GM12878 (cell line): ENCODE measurements at regions of chr2 and their contacts with region 1.

Region 1: GRCh38 chr2:25794544-25795276 is 83.6 kb downstream of the ASXL2 start:
- DNase-seq: peak; percentile 16
- ATAC-seq: peak; percentile 81
- H3K4me3 ChIP-seq: peak overlapping the region; percentile 25; the same call in 1 of the 2 replicates
- H3K27ac ChIP-seq: peak overlapping the region; percentile 13; the same call in 1 of the 2 replicates
- H3K4me1 ChIP-seq: peaks cover 5% of the 10 kb centered on the region; the same call in 1 of the 2 replicates
- H3K27me3 ChIP-seq: no peaks in the 10 kb centered on the region
- CTCF ChIP-seq: no peak
- EP300 ChIP-seq: no peak
- POLR2A ChIP-seq: no peak
- RAD21 ChIP-seq: no peak

Region 2: DNA sequence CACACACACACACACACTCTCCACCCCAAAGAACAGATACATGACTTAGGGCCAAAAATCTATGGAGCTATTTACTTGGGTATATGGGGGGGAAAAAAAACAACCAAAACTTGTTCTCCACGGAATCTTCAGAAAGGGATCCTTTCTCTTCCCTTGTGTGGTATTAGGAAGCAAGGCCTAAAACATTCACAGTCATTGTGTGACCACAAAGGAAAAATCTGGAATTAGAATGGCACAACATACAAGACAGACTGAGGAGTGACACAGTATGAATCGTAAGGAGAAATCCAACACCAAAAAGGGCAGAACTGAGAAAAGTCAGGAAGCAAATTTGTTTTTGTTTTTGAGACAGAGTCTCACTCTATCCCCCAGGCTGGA is 13.3 kb after region 1 on chr2:
- CTCF ChIA-PET with region 1: interaction called, 11 read pairs
- POLR2A ChIA-PET with region 1: interaction called, 4 read pairs
- RAD21 ChIA-PET with region 1: interaction called, 5 read pairs
- SMC1A ChIA-PET with region 1: interaction called, 26 read pairs
- in situ Hi-C with region 1: no loop called
- intact Hi-C with region 1: no loop called
- DNase-seq: no peak
- ATAC-seq: no peak
- H3K4me3 ChIP-seq: no peak overlapping the region
- H3K27ac ChIP-seq: no peak overlapping the region
- H3K4me1 ChIP-seq: no peaks in the 10 kb centered on the region
- H3K27me3 ChIP-seq: no peaks in the 10 kb centered on the region
- CTCF ChIP-seq: no peak
- EP300 ChIP-seq: no peak
- POLR2A ChIP-seq: no peak
- RAD21 ChIP-seq: no peak

Region 3: DNA sequence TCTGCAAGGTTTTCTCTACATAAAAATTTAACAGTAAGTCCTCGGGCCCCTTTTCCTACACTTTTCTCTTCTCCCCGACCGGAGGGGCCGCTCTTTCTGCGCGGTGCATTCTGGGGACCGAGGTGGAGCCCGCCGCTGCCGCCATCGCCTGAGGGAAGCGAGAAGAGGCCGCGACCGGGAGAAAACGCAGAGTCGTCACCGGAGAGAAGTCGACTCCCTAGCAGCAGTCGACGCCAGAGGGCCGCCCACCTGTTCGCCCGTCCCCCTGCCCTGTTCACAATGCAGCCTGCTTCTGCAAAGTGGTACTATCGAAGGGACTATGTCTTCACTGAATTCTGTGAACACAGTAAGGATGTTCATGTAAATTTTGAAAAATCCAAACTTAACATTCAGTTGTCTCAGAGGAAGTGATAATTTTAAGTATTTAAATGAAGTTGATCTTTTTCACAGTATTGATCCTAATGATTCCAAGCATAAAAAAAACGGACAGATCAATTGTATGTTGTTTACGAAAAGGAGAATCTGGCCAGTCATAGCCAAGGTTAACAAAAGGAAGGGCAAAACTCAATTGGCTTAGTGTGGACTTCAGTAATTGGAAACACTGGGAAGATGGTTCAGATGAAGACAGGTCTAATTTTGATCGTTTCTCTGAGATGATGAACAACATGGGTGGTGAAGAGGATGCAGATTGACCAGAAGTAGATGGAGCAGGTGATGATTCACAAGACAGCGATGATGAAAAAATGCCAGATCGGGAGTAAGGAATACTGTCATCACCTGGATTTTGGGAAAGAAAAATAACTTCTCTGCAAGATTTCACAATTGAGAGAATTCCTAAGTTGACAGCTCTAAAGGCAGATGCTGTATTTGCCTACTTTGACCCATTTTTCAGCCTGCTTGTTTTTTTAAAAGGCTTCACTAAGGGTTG is 27.7 kb after region 1 on chr2:
- CTCF ChIA-PET with region 1: no interaction called
- POLR2A ChIA-PET with region 1: interaction called, 4 read pairs
- RAD21 ChIA-PET with region 1: interaction called, 4 read pairs
- SMC1A ChIA-PET with region 1: interaction called, 10 read pairs
- in situ Hi-C with region 1: no loop called
- intact Hi-C with region 1: no loop called
- DNase-seq: no peak
- ATAC-seq: peak; percentile 64
- H3K4me3 ChIP-seq: peak overlapping the region; percentile 27; the same call in 1 of the 2 replicates
- H3K27ac ChIP-seq: 0 out of 2 replicates have a peak overlapping the region, but pooled peaks have one; percentile 26
- H3K4me1 ChIP-seq: peaks cover 9% of the 10 kb centered on the region
- H3K27me3 ChIP-seq: no peaks in the 10 kb centered on the region
- CTCF ChIP-seq: no peak
- EP300 ChIP-seq: no peak
- POLR2A ChIP-seq: peak; percentile 52; the same call in 1 of the 2 replicates
- RAD21 ChIP-seq: no peak

Region 4: GRCh38 chr2:26455037-26455669 is 660.4 kb after region 1 on chr2:
- CTCF ChIA-PET with region 1: no interaction called
- POLR2A ChIA-PET with region 1: no interaction called
- RAD21 ChIA-PET with region 1: no interaction called
- SMC1A ChIA-PET with region 1: no interaction called
- in situ Hi-C with region 1: no loop called
- intact Hi-C with region 1: no loop called
- DNase-seq: no peak
- ATAC-seq: peak; percentile 26; the same call in 2 of the 3 replicates
- H3K4me3 ChIP-seq: no peak overlapping the region
- H3K27ac ChIP-seq: no peak overlapping the region
- H3K4me1 ChIP-seq: no peaks in the 10 kb centered on the region
- H3K27me3 ChIP-seq: peaks cover 0 to 1% of the 10 kb centered on the region in 2 experiments; a peak in 1 of 4 replicates
- CTCF ChIP-seq: no peak
- EP300 ChIP-seq: no peak
- POLR2A ChIP-seq: no peak
- RAD21 ChIP-seq: no peak